HCT116 (cell line): ENCODE measurements at regions of chr6 and their contacts with region 1.

Region 1: DNA sequence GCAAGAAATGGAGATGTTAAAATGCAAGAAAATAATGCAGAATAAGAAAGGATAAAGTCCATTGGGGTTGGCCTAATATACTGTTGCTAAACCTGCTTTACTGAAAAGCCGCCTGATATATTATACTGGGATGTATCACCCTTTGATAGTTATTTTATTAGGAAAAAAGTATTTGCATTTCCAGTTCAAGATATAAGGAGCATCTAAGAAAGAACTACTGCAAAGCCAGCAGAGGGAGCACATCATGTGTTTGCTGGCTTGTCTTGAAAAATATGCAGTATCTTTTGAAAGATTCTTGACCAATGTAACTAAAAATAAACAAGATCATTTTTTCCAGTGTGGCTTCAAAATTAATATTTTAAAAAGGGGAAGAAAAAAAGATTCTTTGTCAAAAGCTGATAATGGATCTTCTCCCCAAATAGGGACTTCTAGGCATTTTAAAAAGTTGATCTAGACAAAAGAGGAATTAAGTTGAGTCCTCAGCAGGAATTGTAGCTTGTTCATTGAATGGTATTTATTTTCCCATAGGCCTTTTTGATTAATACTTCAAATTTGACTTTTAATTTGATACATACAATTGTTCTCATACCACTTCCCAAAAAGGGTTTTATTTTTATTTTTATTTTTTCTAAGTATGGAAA is 214.9 kb downstream of the ZFAND3 start:
- DNase-seq: peak; percentile 23
- ATAC-seq: no peak; the same call in 1 of the 2 replicates
- H3K4me3 ChIP-seq: no peak overlapping the region
- H3K27ac ChIP-seq: no peak overlapping the region
- H3K4me1 ChIP-seq: no peaks in the 10 kb centered on the region
- H3K27me3 ChIP-seq: no peaks in the 10 kb centered on the region
- CTCF ChIP-seq: peak; percentile 39 to 69 (median 61); a peak in 5 of 6 replicates
- POLR2A ChIP-seq: no peak
- RAD21 ChIP-seq: peak; percentile 55

Region 2: GRCh38 chr6:38570750-38571149 is 536.4 kb after region 1 on chr6:
- CTCF ChIA-PET with region 1: interaction called, 7 read pairs
- POLR2A ChIA-PET with region 1: no interaction called
- RAD21 ChIA-PET with region 1: no interaction called
- intact Hi-C with region 1: loop called (anchors 5 kb)
- DNase-seq: no peak
- ATAC-seq: peak; percentile 42; the same call in 1 of the 2 replicates
- H3K4me3 ChIP-seq: no peak overlapping the region
- H3K27ac ChIP-seq: no peak overlapping the region
- H3K4me1 ChIP-seq: peaks cover 0 to 7% of the 10 kb centered on the region in 2 experiments; a peak in 2 of 4 replicates
- H3K27me3 ChIP-seq: no peaks in the 10 kb centered on the region
- CTCF ChIP-seq: peak; percentile 20 to 62 (median 36); a peak in 3 of 6 replicates
- POLR2A ChIP-seq: no peak
- RAD21 ChIP-seq: peak; percentile 51